GM10248 (cell line): ENCODE measurements at regions of chr1 and their contacts with region 1.

Region 1: DNA sequence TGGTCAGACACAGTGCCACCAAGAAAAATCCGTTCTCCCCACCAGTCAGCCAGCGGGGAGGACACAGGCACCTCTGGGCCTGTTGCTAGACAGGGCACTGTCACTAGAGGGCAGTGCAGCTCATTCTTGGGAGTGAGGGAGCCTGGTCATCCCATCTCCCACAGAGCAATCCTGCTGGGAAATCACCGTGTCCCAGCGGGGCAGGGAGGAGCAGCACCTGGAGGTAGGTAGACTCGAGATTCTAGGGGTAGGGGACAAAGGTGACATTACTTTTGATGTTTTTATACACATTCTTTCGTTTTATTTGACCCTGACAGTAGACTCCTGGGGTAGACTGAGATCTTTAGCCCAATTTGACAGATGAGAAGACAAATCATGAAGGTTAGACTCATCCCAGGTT is 6.7 kb upstream of the CAMK1G start:
- DNase-seq: peak; percentile 80
- CTCF ChIP-seq: peak; percentile 91

Region 2: DNA sequence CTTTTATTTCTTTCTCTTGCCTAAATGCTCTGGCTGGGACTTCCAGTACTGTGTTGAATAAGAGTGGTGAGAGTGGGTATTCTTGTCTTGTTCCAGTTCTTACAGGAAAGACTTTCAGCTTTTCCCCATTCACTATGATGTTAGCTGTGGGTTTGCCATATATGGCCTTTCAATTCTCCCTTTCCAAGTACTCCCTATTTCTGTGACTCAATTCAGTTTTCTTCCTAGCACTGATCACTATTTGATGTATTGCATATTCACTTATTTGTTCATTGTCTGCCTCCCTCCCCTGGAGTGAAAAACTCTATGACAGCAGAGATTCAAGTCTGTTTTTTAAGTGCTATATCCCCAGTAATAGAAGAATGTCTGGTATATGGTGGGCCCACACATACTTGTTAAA is 611.4 kb before region 1 on chr1:
- CTCF ChIA-PET with region 1: no interaction called
- POLR2A ChIA-PET with region 1: no interaction called
- DNase-seq: no peak
- CTCF ChIP-seq: no peak

Region 3: DNA sequence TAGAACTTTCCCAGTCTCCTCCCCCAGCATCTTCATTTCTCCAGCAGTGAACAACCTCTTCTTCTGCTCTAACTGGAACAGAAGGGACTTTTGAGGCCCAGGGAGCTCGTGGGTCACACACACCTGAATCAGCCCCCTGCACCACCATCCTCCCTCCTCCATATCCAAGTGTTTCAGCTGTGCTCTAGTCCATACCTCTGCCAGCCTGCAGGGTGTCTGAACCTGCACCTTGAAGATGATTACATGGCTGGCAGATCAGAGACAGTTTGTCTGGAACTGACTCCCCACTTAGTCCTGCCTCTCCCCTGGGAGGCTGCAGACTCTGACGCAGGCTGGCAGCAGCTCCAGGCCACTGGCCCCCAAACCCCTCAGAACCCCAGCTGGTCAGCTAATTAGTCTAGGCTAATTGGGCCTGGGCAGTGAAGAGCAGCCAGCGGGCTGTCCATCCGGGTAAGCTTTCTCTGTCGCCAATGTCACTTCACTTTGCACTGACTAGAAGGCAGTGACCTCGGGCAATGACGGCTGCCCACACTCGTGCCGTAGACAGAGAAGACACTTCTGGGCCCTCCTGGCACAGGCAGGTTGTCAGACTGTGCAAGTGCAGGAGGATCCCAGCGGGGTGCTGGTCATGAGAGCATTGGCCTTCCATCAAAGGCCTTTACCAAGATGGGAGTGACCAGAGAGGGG is 18.9 kb after region 1 on chr1:
- CTCF ChIA-PET with region 1: interaction called, 11 read pairs
- POLR2A ChIA-PET with region 1: no interaction called
- DNase-seq: no peak
- CTCF ChIP-seq: no peak

Region 4: GRCh38 chr1:209607102-209607794 is 30.4 kb after region 1 on chr1:
- CTCF ChIA-PET with region 1: interaction called, 17 read pairs
- POLR2A ChIA-PET with region 1: no interaction called
- DNase-seq: peak; percentile 74
- CTCF ChIP-seq: no peak